OCI-LY7 (cell line): ENCODE measurements at regions of chr15 and their contacts with region 1.

Region 1: GRCh38 chr15:63233667-63234423 is 43.6 kb upstream of the APH1B start:
- DNase-seq: no peak
- H3K4me3 ChIP-seq: no peak overlapping the region
- H3K27ac ChIP-seq: no peak overlapping the region
- H3K4me1 ChIP-seq: peaks cover 21% of the 10 kb centered on the region
- CTCF ChIP-seq: no peak

Region 2: DNA sequence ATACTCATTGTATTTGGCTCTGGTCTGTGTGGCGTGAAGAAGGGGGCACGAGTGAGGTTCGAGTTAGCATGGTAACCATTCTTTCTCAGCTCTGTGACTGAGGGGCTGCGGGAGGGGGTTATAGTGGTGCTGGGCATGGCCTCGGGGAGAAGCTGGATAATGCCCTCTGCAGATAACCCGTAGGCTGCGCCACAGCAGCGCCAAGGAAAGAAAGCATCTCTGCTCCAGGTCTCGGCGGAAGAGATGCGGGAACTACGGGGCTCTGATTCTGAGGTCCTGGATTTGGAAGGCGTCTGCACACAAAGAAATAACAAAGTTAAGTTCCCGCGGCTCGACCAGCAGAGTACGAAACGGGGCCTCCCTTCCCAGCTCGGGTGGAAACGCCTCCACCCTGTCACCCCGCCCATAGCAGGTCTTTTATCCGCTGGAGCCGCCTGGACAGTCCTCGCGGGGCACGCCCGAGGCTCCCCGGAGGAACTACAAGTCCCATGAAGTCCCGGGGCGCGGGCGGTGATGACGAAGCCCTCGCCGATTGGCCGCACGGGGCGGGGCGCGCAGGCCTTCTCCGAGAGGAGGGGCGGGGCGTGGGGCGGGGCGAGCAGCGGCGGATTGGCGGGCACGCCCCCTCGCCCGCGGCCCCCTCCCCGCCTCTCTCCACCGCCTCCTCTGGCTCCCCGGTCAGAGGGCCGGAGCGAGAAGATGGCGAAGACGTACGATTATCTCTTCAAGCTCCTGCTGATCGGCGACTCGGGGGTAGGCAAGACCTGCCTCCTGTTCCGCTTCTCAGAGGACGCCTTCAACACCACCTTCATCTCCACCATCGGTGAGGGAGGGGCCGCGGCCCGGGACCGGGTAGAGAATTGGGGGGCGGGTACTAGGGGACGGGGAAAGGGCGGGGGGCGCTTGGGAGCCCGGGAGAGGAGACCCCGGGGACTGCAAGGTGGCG is 44.6 kb before region 1 on chr15 and contains the start of gene RAB8B:
- CTCF ChIA-PET with region 1: no interaction called
- POLR2A ChIA-PET with region 1: interaction called, 13 read pairs
- intact Hi-C with region 1: no loop called
- DNase-seq: peak; percentile 96
- H3K4me3 ChIP-seq: peak within 1 kb of the TSS; percentile 79
- H3K27ac ChIP-seq: peak within 1 kb of the TSS; percentile 93
- H3K4me1 ChIP-seq: peaks cover 46% of the 10 kb centered on the region
- CTCF ChIP-seq: no peak
- total RNA-seq, gene RAB8B: 4.9 and 9.5 TPM in 2 replicates